Motor neuron (in vitro differentiated cells): ENCODE measurements at regions of chr3 and their contacts with region 1.

Region 1: DNA sequence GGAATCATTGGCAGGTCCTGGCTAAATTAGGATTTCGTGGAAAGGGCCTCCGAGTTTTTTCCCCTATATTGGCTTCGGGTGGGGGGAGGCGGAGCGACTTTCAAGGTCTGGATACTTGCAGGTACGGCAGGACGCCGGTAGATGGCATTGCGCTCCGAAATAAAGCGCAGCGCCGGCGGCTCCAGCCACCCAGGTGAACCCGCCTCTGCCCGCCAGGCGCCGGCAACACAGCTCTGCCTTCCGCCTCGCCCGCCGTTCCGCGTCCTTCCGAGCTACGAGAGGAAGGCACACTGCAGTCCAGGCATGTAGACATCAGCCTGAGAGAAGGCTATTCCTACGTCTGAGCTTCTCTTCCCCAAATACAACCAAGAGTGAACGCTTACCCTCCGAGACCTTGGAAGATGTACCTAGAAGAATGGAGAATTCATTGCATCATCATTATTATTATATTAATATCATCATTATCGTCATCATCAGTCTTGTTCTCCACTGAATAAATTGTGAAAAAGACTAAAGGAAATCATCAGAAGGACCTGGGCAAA is 514.1 kb downstream of the MECOM start:
- ATAC-seq: peak; percentile 39 to 84 (median 72)
- H3K4me3 ChIP-seq: peak overlapping the region; percentile 16 to 35 (median 24)
- H3K27ac ChIP-seq: peak overlapping the region in 1 of 2 donors; percentile 7
- H3K4me1 ChIP-seq: peaks cover 26 to 45% of the 10 kb centered on the region in 2 donors

Region 2: GRCh38 chr3:168865022-168865551 is 284.3 kb before region 1 on chr3:
- in situ Hi-C with region 1: loop called in 1 of 9 experiments (anchors 25 kb)
- ATAC-seq: no peak
- H3K4me3 ChIP-seq: no peak overlapping the region
- H3K27ac ChIP-seq: no peak overlapping the region
- H3K4me1 ChIP-seq: no peaks in the 10 kb centered on the region

Region 3: DNA sequence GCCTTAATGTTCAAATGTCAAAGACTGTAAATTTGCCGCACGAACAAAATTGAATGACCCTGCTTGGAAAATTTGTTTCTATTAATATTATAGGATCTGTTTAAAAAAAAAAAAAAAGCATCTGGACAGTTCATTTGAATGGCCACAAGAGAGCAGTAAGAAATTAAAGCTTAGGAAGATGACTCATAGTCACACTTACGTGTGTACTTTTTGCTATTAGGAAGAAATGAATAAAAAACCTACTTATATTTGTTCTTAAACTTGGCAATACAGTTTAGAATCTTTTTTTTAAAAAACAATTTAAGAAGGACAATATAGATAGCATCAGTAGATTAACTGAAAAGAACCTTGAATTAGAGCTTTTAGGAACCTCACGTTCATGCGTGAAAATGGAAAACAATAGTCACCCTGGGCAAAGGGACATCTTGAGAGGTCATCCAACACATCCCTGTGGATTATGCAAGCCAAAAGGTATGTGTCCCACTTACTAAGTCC is 107.7 kb before region 1 on chr3:
- in situ Hi-C with region 1: loop called in 1 of 9 experiments (anchors 25 kb)
- ATAC-seq: peak in 7 of 8 experiments; percentile 40 to 77 (median 56)
- H3K4me3 ChIP-seq: no peak overlapping the region
- H3K27ac ChIP-seq: no peak overlapping the region
- H3K4me1 ChIP-seq: peaks cover 0 to 4% of the 10 kb centered on the region in 2 donors

Region 4: GRCh38 chr3:169668957-169669681 is 519.7 kb after region 1 on chr3:
- in situ Hi-C with region 1: loop called (anchors 10 to 25 kb)
- ATAC-seq: peak; percentile 95 to 99 (median 98)
- H3K4me3 ChIP-seq: peak overlapping the region; percentile 36 to 48 (median 39)
- H3K27ac ChIP-seq: no peak overlapping the region
- H3K4me1 ChIP-seq: peaks cover 14 to 15% of the 10 kb centered on the region in 2 donors

Region 5: DNA sequence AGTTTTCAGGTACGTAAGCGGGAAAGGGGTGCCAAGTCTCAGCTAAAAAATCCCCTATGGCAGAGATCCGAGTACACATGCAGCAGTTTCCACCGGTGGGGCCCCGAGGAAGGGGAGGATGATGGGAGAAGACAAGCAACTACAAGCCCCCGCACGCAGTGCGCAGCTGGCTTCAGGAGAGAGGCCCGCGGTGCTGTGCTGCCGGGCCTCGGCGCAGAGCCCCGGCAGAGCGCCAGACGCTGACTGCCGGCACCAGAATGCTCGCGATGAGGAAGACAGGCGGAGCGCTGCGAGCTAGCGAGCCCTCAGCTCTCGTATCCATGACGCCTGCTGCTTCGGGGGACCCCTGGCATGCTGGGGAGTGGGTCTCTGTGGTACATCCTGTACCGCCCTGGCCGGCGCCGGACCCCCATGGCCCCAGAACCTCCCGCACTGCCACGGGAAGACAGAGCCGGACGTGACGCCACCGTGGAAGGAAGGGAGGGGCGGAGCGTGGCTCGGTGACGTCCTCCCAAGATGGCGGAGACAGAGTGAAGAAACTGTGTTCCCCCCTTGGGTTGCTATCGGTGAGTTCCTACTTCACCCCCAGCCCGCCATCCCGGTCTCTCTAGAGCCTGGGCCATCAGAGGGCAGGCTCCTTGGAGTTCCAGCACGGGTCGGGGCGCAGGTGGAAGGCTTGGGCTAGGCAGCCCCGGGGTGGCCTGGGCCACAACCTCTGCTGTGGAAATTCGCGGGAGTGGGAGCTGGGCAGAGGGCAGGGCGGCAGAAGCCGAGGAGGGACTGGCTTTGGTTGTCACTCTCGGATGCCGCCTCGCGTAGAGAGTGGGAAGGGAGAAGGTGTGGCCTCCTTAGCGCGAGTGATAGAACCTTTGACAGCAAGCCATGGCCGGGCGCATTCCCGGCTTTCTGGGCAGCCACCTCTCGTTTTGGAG is 623.7 kb after region 1 on chr3 and contains the start of gene MYNN:
- in situ Hi-C with region 1: loop called in 1 of 9 experiments (anchors 25 kb)
- ATAC-seq: peak; percentile 81 to 95 (median 92)
- H3K4me3 ChIP-seq: peak within 1 kb of the TSS; percentile 61 to 100 (median 97)
- H3K27ac ChIP-seq: peak within 1 kb of the TSS; percentile 92 to 98
- H3K4me1 ChIP-seq: peaks cover 0 to 21% of the 10 kb centered on the region in 2 donors
- total RNA-seq, gene MYNN: 13.4 to 26.4 (median 18.6) TPM